ENCODE measurements at regions of chr17 and their contacts with region 1.

Region 1: DNA sequence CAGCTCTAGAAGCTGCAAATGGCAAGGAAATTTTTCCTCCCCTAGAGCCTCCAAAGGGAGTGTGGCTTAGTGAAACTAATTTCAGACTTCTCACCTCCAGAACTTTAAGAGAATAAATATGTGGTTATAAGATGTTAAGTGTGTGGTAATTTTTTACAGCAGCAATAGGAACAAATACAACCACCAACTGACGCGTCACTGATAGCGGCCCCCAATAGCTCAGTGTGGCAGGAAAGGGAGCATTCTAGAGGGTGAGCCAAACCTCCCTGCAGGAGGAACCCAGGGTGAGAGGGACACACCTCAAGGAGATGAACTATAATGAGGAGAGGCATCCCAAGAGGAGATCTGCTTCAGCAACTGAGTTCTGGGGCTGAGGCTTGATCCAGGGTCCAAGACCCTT is 4.0 kb downstream of the CCL4 start:
- DNase-seq: peak in 1 of 14 experiments; percentile 69
- ATAC-seq: no peak
- H3K4me3 ChIP-seq: no peak overlapping the region
- H3K4me3 Mint-ChIP-seq: no peak overlapping the region
- H3K27ac ChIP-seq: no peak overlapping the region
- H3K27ac Mint-ChIP-seq: no peak overlapping the region
- H3K4me1 ChIP-seq: peaks cover 20% of the 10 kb centered on the region
- H3K4me1 Mint-ChIP-seq: no peaks in the 10 kb centered on the region
- H3K27me3 ChIP-seq: peaks cover 5 to 9% of the 10 kb centered on the region in 2 experiments
- H3K27me3 Mint-ChIP-seq: peaks cover 37% of the 10 kb centered on the region
- CTCF ChIP-seq: no peak

Region 2: DNA sequence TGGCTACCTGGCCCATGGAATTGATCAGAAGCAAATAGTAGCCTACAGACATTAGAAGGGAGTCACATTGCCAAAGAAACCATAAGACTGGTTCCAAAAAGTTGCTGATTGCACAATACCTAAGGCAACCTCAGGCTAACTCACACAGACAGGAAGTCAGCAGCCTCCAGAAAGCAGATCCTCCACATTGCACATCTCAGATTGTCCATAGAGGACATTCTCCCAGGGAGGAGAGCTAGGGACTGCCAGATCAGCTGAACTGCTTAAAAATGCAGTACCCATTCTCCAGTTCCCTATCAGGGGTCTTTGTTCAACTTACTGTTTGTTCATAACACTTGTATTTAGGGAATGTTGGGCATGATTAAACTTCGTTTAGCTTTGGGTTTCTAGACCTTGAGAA is 21.9 kb before region 1 on chr17:
- CTCF ChIA-PET with region 1: no interaction called
- POLR2A ChIA-PET with region 1: no interaction called
- intact Hi-C with region 1: loop called in 1 of 2 experiments (anchors 2 kb)
- DNase-seq: peak in 2 of 14 experiments; percentile 45 to 57
- ATAC-seq: no peak
- H3K4me3 ChIP-seq: no peak overlapping the region
- H3K4me3 Mint-ChIP-seq: no peak overlapping the region
- H3K27ac ChIP-seq: no peak overlapping the region
- H3K27ac Mint-ChIP-seq: no peak overlapping the region
- H3K4me1 ChIP-seq: peaks cover 16% of the 10 kb centered on the region
- H3K4me1 Mint-ChIP-seq: peaks cover 9% of the 10 kb centered on the region
- H3K27me3 ChIP-seq: peaks cover 0 to 17% of the 10 kb centered on the region in 2 experiments
- H3K27me3 Mint-ChIP-seq: peaks cover 16% of the 10 kb centered on the region
- CTCF ChIP-seq: no peak

Measured in CD4-positive, alpha-beta T cell (primary cell).